ENCODE measurements at regions of chr5 and their contacts with region 1.

Region 1: GRCh38 chr5:168987543-168988300 is 313.2 kb downstream of the SLIT3 start:
- DNase-seq: no peak
- H3K4me3 ChIP-seq: no peak overlapping the region
- CTCF ChIP-seq: peak; percentile 73

Region 2: DNA sequence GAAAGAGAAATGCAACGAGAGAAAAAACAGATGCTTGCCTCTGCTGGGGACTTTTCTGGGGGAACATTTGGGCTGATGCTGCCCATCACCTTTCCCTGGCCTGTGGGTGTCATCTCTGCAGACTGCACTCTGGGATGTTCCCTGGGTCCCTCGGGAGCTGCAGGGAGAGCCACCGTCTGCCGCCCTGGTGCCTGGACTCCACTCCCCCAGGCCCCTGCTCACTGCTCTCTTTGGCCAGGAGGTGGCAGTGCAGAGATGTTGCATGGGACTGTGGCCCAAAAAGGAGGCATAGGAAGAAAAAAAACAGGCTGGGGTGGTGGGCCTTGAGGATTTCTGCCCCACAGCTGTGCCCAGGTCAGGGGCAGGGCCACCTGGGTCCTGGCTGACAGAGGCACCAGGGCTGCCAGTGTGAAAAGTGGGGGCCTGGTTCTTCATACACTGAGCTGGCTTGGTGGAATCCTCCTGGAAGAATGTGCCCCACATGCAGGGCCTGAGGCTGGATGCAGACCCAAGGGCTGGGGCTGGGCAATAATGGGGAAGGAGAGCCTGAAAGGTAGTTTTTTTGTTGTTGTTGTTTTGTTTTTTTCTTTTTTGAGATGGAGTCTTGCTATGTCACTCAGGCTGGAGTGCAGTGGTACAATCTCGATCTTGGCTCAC is 40.4 kb before region 1 on chr5:
- CTCF ChIA-PET with region 1: interaction called, 10 read pairs
- POLR2A ChIA-PET with region 1: no interaction called
- DNase-seq: no peak
- H3K4me3 ChIP-seq: no peak overlapping the region
- CTCF ChIP-seq: peak; percentile 94

Region 3: DNA sequence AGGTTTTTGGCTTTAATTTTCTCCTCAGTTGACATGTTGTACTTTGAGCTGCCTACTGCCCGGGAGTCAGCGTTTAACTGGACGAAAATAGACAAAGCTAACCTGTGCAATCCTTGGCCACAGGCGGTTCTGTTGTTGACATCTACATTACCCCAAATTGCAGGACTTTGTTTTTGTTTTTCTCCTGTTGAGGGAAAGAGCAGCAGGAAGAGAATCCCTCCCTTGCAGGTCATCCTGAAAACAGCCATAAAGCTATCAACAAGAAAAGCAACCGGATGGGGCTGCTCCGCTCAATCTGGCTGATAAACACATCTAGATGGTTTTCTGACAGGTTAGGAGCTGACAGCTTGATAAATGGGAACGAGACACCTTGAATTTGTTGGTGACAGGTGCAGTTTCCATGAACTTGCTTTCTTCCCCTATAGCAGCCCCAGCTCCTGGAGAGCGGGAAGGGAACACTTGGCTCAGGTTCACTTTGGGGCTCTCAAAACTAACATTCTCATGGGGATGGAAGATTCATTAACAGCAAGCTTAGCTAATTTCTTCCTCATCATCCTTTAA is 18.3 kb before region 1 on chr5:
- CTCF ChIA-PET with region 1: interaction called, 10 read pairs
- POLR2A ChIA-PET with region 1: no interaction called
- DNase-seq: no peak
- H3K4me3 ChIP-seq: no peak overlapping the region
- CTCF ChIP-seq: no peak

Region 4: GRCh38 chr5:169289520-169289919 is 301.8 kb after region 1 on chr5:
- CTCF ChIA-PET with region 1: interaction called, 13 read pairs
- POLR2A ChIA-PET with region 1: no interaction called
- DNase-seq: no peak
- H3K4me3 ChIP-seq: no peak overlapping the region
- CTCF ChIP-seq: no peak

Region 5: GRCh38 chr5:169548315-169548714 is 560.6 kb after region 1 on chr5:
- CTCF ChIA-PET with region 1: interaction called, 75 read pairs
- POLR2A ChIA-PET with region 1: no interaction called
- DNase-seq: no peak
- H3K4me3 ChIP-seq: no peak overlapping the region
- CTCF ChIP-seq: peak; percentile 32

Region 6: DNA sequence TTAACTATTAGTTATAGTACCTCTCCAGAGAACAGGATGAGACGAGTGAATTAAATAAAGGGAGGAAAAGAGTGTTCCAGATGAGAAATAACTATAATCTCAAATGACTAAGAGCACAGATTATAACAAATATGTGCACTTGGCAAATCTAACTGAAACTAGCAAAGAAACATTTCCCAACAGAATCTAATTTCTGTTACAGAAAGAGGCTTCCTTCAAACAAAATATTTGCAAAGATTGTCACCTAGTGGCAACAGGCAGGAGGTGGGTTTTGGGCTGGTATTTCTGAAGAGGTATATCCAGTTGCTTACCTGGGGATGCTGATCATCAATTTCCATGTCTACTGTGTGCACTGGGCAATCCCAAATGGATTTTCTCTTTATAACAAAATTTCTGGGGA is 590.2 kb after region 1 on chr5:
- CTCF ChIA-PET with region 1: interaction called, 68 read pairs
- POLR2A ChIA-PET with region 1: no interaction called
- DNase-seq: no peak
- H3K4me3 ChIP-seq: no peak overlapping the region
- CTCF ChIP-seq: peak; percentile 46

Measured in AG04449 (cell line).